ENCODE measurements at regions of chr10 and their contacts with region 1.

Region 1: GRCh38 chr10:29735596-29736318 is 101.0 kb upstream of the SVIL start:
- DNase-seq: peak; percentile 97
- H3K4me3 ChIP-seq: peak overlapping the region; percentile 81 to 89
- H3K27ac ChIP-seq: peak overlapping the region; percentile 79 to 86
- H3K4me1 ChIP-seq: peaks cover 12 to 15% of the 10 kb centered on the region in 2 experiments; a peak in 1 of 4 replicates
- H3K27me3 ChIP-seq: no peaks in the 10 kb centered on the region
- CTCF ChIP-seq: peak; percentile 85
- EP300 ChIP-seq: peak in 1 of 2 experiments; percentile 42; a peak in 1 of 4 replicates
- RAD21 ChIP-seq: peak; percentile 61

Region 2: GRCh38 chr10:29725133-29725720 is 10.5 kb before region 1 on chr10:
- CTCF ChIA-PET with region 1: interaction called, 21 read pairs
- POLR2A ChIA-PET with region 1: no interaction called
- DNase-seq: peak; percentile 60
- H3K4me3 ChIP-seq: no peak overlapping the region
- H3K27ac ChIP-seq: peak overlapping the region in 1 of 2 experiments; percentile 31; a peak in 1 of 4 replicates
- H3K4me1 ChIP-seq: peaks cover 11 to 12% of the 10 kb centered on the region in 2 experiments; a peak in 2 of 4 replicates
- H3K27me3 ChIP-seq: no peaks in the 10 kb centered on the region
- CTCF ChIP-seq: no peak
- EP300 ChIP-seq: no peak
- RAD21 ChIP-seq: no peak

Region 3: GRCh38 chr10:29820890-29821461 is 85.2 kb after region 1 on chr10:
- CTCF ChIA-PET with region 1: no interaction called
- POLR2A ChIA-PET with region 1: no interaction called
- DNase-seq: no peak
- H3K4me3 ChIP-seq: no peak overlapping the region
- H3K27ac ChIP-seq: no peak overlapping the region
- H3K4me1 ChIP-seq: no peaks in the 10 kb centered on the region
- H3K27me3 ChIP-seq: no peaks in the 10 kb centered on the region
- CTCF ChIP-seq: no peak
- EP300 ChIP-seq: no peak
- RAD21 ChIP-seq: no peak

Region 4: DNA sequence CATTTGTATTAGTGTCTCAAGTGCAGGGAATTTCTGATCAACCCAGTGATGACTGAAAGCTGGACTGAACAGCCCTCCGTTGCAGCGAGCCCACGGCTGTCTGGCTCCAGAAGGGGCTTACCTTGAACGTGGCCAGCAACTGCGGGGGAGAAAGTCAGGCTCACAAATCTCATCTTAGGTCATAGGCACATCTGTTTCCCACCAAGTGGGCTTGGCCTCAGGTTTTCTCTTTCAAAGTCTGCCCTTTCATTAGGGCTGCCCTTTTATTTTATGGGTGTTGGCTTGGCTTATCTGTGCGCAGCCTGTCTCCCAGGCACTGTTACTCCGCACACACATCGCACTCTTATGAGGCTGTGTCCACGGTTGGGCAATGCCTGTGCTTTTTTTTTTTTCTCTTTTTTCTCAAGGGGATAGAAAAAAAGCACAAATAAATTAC is 145.6 kb after region 1 on chr10:
- CTCF ChIA-PET with region 1: no interaction called
- POLR2A ChIA-PET with region 1: no interaction called
- DNase-seq: no peak
- H3K4me3 ChIP-seq: no peak overlapping the region
- H3K27ac ChIP-seq: no peak overlapping the region
- H3K4me1 ChIP-seq: peaks cover 0 to 3% of the 10 kb centered on the region in 2 experiments; a peak in 1 of 4 replicates
- H3K27me3 ChIP-seq: no peaks in the 10 kb centered on the region
- CTCF ChIP-seq: no peak
- EP300 ChIP-seq: no peak
- RAD21 ChIP-seq: no peak